Heart right ventricle (tissue), 16 donors: ENCODE measurements at regions of chr15 and their contacts with region 1.

Region 1: DNA sequence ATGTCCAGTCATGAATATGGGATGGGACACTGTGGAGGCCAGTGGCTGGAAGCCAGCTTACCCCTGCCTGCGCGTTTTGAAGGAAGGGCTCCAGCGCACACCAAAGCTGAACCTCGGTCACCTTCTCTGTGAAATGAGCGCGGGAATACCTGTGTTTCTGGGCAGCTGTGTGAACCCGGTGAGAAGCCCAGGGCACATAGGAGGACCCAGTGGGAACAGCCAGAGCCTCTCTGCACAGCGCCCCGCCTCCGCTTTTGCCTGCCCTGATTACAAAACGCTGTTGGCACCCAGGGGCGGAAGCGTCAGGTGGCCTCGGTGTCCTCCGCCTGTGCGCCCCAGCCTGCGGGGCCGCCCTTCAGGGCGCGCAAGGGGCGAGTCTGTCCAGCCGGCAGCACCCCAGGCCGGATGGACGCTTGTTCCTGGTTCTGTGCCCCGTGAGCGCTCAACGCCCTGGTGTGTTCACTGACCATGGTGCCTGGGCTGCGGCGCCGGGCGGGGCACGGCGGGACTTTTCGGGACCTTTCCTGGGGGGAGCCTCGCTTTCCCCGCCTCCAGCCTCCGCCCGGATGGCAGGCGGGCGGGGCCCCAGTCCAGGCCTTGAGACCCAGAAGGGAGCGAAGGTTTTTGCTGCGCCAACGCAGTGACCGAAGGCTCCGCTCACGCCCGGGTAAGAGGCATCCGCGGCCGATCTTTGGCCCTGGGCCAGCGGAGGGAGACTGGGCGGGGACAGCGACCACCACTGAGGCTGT is at the start of gene SQOR:
- DNase-seq: peak; percentile 83 to 86
- ATAC-seq: peak; percentile 89 to 95 (median 92)
- H3K4me3 ChIP-seq: peak within 1 kb of the TSS; percentile 49 to 86 (median 76)
- H3K27ac ChIP-seq: peak within 1 kb of the TSS; percentile 70 to 95 (median 90)
- H3K4me1 ChIP-seq: peaks cover 0 to 64% (median 34%) of the 10 kb centered on the region in 9 donors
- H3K27me3 ChIP-seq: no peaks in the 10 kb centered on the region
- CTCF ChIP-seq: no peak
- total RNA-seq, gene SQOR: 13.9 to 41.8 (median 17.5) TPM

Region 2: GRCh38 chr15:45166834-45167630 is 467.6 kb before region 1 on chr15:
- intact Hi-C with region 1: loop called in 1 of 10 experiments (anchors 5 kb)
- DNase-seq: peak; percentile 86 to 89
- ATAC-seq: peak; percentile 81 to 90 (median 86)
- H3K4me3 ChIP-seq: peak overlapping the region; percentile 42 to 92 (median 78)
- H3K27ac ChIP-seq: peak overlapping the region; percentile 97 to 100 (median 99)
- H3K4me1 ChIP-seq: peaks cover 0 to 42% (median 19%) of the 10 kb centered on the region in 9 donors
- H3K27me3 ChIP-seq: no peaks in the 10 kb centered on the region
- CTCF ChIP-seq: peak in 8 of 9 donors; percentile 53 to 72 (median 64)

Region 3: DNA sequence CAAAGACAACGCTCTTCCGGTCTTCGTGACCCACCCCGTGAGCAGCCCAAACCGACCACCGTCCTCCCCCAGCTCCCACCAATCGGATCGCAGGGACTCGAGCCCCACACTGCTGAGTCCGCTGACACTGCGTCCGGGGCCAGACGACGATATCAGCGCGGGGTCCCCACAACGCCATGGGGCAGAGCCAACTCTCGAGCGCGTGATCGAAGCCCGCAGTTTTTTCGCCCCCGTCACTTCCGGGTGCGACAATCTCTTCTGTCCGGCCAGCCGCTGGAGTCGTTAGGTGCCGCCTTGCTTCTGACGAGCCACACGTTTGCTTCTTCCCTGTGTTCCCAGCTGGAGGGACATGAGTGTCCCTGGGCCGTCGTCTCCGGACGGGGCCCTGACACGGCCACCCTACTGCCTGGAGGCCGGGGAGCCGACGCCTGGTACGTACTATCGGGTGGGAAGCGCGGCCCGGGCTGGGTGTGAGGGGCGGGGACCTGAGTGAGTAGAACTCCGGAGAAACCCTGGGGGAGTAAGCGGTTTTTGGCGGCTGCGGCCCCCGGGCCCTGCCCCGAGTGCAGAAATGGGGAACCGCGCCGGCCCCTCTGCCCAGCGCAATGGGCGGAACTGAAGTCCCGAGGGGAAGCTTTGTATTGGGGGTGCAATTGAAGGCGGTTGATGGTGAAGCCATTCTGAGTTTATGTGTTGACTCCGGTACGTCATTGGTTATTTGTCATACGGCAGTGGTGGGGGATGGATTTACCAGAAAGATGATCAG is 47.3 kb before region 1 on chr15 and contains the start of gene BLOC1S6:
- intact Hi-C with region 1: loop called in 2 of 10 experiments (anchors 2 to 10 kb)
- DNase-seq: peak; percentile 87 to 94
- ATAC-seq: peak; percentile 90 to 96 (median 94)
- H3K4me3 ChIP-seq: peak within 1 kb of the TSS; percentile 72 to 99 (median 80)
- H3K27ac ChIP-seq: peak within 1 kb of the TSS; percentile 95 to 99 (median 97)
- H3K4me1 ChIP-seq: peaks cover 10 to 64% (median 49%) of the 10 kb centered on the region in 9 donors
- H3K27me3 ChIP-seq: peaks cover 0 to under 1% (median 0%) of the 10 kb centered on the region in 7 donors
- CTCF ChIP-seq: peak in 1 of 9 donors; percentile 13
- total RNA-seq, gene BLOC1S6: 24.8 to 33.9 (median 28.5) TPM